Body of pancreas (tissue), 4 donors: ENCODE measurements at regions of chr1 and their contacts with region 1.

Region 1: GRCh38 chr1:95035536-95035935 is 37.2 kb downstream of the ALG14 start:
- DNase-seq: no peak
- ATAC-seq: no peak
- H3K4me3 ChIP-seq: no peak overlapping the region
- H3K27ac ChIP-seq: no peak overlapping the region
- H3K4me1 ChIP-seq: no peaks in the 10 kb centered on the region
- H3K27me3 ChIP-seq: no peaks in the 10 kb centered on the region
- CTCF ChIP-seq: no peak
- POLR2A ChIP-seq: no peak

Region 2: GRCh38 chr1:94929351-94930217 is 106.0 kb before region 1 on chr1:
- intact Hi-C with region 1: loop called (anchors 10 kb)
- DNase-seq: peak in 1 of 4 donors; percentile 22
- ATAC-seq: no peak
- H3K4me3 ChIP-seq: no peak overlapping the region
- H3K27ac ChIP-seq: no peak overlapping the region
- H3K4me1 ChIP-seq: peaks cover 35% of the 10 kb centered on the region
- H3K27me3 ChIP-seq: no peaks in the 10 kb centered on the region
- CTCF ChIP-seq: no peak
- POLR2A ChIP-seq: no peak